Activated CD4-positive, alpha-beta T cell treated with anti-CD3 and anti-CD28 coated beads for 36 hours (primary cell): ENCODE measurements at regions of chr11 and their contacts with region 1.

Region 1: DNA sequence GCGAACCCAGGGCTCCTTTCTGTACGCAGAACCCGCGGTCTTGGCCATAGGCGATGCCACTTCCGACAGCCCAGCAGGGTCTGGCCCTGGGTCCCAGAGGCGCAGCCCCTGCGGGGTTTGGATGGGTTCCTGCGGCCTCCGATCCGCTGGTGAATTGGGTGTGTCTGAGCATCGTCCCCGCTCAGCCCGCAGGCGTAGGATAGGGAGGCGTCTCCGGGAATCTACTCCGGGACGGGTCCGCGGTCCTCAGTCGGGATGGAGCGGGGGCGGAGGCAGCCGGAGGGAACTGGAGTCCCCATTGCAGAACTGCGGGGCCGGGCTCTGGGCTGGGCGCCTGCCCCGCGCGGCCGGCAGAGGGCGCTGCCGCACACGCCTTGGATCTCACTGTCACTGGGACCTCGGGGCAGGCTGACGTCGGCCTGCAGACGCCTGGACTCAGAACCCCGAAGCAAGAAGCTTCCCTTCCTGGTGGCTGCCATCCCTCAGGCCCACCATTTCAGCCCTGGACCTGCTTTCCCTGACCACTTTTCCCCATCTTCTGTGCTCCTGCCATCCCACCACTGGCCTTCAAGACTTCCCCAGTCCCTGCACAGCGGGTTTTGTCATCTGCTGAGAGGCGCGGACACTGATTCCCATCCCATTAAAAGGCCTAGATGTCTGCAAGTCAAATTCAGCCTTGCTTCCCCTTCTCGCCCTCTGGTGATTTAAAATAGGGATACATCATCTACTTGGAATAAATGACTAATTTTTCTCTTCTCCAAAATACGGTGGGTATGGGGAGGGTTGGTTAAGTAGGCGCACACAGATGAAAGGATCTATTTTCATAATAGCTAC is 38.3 kb upstream of the CREB3L1 start:
- DNase-seq: peak; percentile 90
- ATAC-seq: peak; percentile 70
- H3K4me3 Mint-ChIP-seq: peak overlapping the region; percentile 70
- H3K27ac Mint-ChIP-seq: peak overlapping the region; percentile 6
- H3K4me1 Mint-ChIP-seq: peaks cover 36% of the 10 kb centered on the region
- H3K27me3 Mint-ChIP-seq: peaks cover 11% of the 10 kb centered on the region

Region 2: GRCh38 chr11:45964911-45965389 is 274.2 kb before region 1 on chr11:
- CTCF ChIA-PET with region 1: interaction called, 6 read pairs
- POLR2A ChIA-PET with region 1: no interaction called
- intact Hi-C with region 1: loop called in 1 of 2 experiments (anchors 2 kb)
- DNase-seq: peak; percentile 73
- ATAC-seq: peak; percentile 95
- H3K4me3 Mint-ChIP-seq: no peak overlapping the region
- H3K27ac Mint-ChIP-seq: no peak overlapping the region
- H3K4me1 Mint-ChIP-seq: no peaks in the 10 kb centered on the region
- H3K27me3 Mint-ChIP-seq: no peaks in the 10 kb centered on the region

Region 3: GRCh38 chr11:46121724-46122477 is 117.3 kb before region 1 on chr11:
- CTCF ChIA-PET with region 1: interaction called, 6 read pairs
- POLR2A ChIA-PET with region 1: no interaction called
- intact Hi-C with region 1: loop called (anchors 1 to 2 kb)
- DNase-seq: peak; percentile 83
- ATAC-seq: peak; percentile 39
- H3K4me3 Mint-ChIP-seq: peak overlapping the region; percentile 81
- H3K27ac Mint-ChIP-seq: peak overlapping the region; percentile 86
- H3K4me1 Mint-ChIP-seq: peaks cover 41% of the 10 kb centered on the region
- H3K27me3 Mint-ChIP-seq: no peaks in the 10 kb centered on the region

Region 4: GRCh38 chr11:46315033-46315738 is 76.0 kb after region 1 on chr11:
- CTCF ChIA-PET with region 1: interaction called, 230 read pairs
- POLR2A ChIA-PET with region 1: no interaction called
- intact Hi-C with region 1: loop called (anchors 1 to 2 kb)
- DNase-seq: peak; percentile 86
- ATAC-seq: peak; percentile 81
- H3K4me3 Mint-ChIP-seq: no peak overlapping the region
- H3K27ac Mint-ChIP-seq: no peak overlapping the region
- H3K4me1 Mint-ChIP-seq: peaks cover 16% of the 10 kb centered on the region
- H3K27me3 Mint-ChIP-seq: no peaks in the 10 kb centered on the region

Region 5: GRCh38 chr11:46332568-46333393 is 93.6 kb after region 1 on chr11:
- CTCF ChIA-PET with region 1: interaction called, 10 read pairs
- POLR2A ChIA-PET with region 1: no interaction called
- intact Hi-C with region 1: no loop called
- DNase-seq: peak; percentile 75
- ATAC-seq: peak; percentile 18
- H3K4me3 Mint-ChIP-seq: peak overlapping the region; percentile 71
- H3K27ac Mint-ChIP-seq: peak overlapping the region; percentile 3
- H3K4me1 Mint-ChIP-seq: peaks cover 72% of the 10 kb centered on the region
- H3K27me3 Mint-ChIP-seq: no peaks in the 10 kb centered on the region

Region 6: DNA sequence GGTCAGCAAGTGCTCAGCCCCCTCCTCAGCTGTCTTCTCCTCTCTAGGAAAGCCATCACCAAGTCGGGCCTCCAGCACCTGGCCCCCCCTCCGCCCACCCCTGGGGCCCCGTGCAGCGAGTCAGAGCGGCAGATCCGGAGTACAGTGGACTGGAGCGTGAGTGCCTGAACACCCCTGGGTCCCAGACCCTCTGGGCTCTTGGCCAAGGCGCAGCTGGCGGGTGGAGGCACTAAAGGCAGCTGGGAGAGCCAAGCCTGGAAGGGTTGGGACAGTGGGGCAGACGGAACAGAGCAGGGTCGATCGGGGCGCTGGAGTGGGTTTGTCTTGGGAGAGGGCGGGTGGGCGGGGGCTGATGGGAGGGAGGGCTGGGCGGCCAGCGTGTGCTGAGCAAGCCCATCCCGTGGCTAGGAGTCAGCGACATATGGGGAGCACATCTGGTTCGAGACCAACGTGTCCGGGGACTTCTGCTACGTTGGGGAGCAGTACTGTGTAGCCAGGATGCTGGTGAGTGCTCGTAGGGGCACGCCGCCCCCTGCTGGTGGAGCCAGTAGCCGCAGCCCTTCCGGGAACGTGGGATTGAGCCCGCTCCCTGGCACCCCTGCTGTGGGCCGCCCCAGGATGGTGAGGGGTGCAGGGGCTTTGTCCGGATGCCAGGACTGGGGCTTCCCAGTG is 128.2 kb after region 1 on chr11:
- CTCF ChIA-PET with region 1: interaction called, 4 read pairs
- POLR2A ChIA-PET with region 1: no interaction called
- intact Hi-C with region 1: loop called (anchors 1 to 5 kb)
- DNase-seq: peak; percentile 87
- ATAC-seq: peak; percentile 86
- H3K4me3 Mint-ChIP-seq: no peak overlapping the region
- H3K27ac Mint-ChIP-seq: peak overlapping the region; percentile 83
- H3K4me1 Mint-ChIP-seq: peaks cover 30% of the 10 kb centered on the region
- H3K27me3 Mint-ChIP-seq: no peaks in the 10 kb centered on the region

Region 7: GRCh38 chr11:46537537-46538295 is 298.5 kb after region 1 on chr11:
- CTCF ChIA-PET with region 1: interaction called, 3 read pairs
- POLR2A ChIA-PET with region 1: no interaction called
- intact Hi-C with region 1: loop called in 1 of 2 experiments (anchors 5 kb)
- DNase-seq: peak; percentile 79
- ATAC-seq: peak; percentile 99
- H3K4me3 Mint-ChIP-seq: no peak overlapping the region
- H3K27ac Mint-ChIP-seq: peak overlapping the region; percentile 24
- H3K4me1 Mint-ChIP-seq: peaks cover 18% of the 10 kb centered on the region
- H3K27me3 Mint-ChIP-seq: no peaks in the 10 kb centered on the region